Tibial artery (tissue), 4 donors: ENCODE measurements at regions of chr12 and their contacts with region 1.

Region 1: DNA sequence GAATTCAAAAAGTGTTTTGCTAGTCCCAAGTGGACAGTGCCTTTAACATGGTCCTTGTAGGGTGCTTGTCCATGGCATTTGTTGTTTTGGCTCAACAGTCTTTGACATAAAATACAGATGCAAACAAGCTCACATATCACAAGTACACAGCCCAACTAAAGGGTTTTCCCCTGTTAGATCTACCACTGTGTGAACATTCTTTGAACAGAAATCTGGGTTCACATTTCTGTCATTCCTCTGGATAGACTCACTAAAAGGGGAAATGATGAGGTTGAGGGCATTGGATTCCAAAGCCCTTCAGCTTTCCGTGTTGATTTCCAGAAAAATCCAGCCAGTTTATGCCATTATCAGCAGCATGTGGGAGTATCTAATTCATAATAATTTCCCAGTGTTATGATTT is 54.1 kb downstream of the EP400 start:
- DNase-seq: no peak
- H3K4me3 ChIP-seq: no peak overlapping the region
- H3K27ac ChIP-seq: no peak overlapping the region
- H3K4me1 ChIP-seq: no peaks in the 10 kb centered on the region
- H3K27me3 ChIP-seq: no peaks in the 10 kb centered on the region
- CTCF ChIP-seq: no peak

Region 2: DNA sequence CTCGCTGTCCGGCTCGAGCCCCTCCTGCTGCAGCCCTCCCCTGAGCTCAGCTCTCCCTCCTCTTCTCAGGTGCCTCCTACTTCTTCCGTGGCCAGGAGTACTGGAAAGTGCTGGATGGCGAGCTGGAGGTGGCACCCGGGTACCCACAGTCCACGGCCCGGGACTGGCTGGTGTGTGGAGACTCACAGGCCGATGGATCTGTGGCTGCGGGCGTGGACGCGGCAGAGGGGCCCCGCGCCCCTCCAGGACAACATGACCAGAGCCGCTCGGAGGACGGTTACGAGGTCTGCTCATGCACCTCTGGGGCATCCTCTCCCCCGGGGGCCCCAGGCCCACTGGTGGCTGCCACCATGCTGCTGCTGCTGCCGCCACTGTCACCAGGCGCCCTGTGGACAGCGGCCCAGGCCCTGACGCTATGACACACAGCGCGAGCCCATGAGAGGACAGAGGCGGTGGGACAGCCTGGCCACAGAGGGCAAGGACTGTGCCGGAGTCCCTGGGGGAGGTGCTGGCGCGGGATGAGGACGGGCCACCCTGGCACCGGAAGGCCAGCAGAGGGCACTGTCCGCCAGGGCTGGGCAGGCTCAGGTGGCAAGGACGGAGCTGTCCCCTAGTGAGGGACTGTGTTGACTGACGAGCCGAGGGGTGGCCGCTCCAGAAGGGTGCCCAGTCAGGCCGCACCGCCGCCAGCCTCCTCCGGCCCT is 152.8 kb before region 1 on chr12:
- intact Hi-C with region 1: loop called (anchors 5 kb)
- DNase-seq: no peak
- H3K4me3 ChIP-seq: no peak overlapping the region
- H3K27ac ChIP-seq: no peak overlapping the region
- H3K4me1 ChIP-seq: no peaks in the 10 kb centered on the region
- H3K27me3 ChIP-seq: peaks cover 0 to 62% of the 10 kb centered on the region in 2 donors
- CTCF ChIP-seq: peak; percentile 58 to 67

Region 3: DNA sequence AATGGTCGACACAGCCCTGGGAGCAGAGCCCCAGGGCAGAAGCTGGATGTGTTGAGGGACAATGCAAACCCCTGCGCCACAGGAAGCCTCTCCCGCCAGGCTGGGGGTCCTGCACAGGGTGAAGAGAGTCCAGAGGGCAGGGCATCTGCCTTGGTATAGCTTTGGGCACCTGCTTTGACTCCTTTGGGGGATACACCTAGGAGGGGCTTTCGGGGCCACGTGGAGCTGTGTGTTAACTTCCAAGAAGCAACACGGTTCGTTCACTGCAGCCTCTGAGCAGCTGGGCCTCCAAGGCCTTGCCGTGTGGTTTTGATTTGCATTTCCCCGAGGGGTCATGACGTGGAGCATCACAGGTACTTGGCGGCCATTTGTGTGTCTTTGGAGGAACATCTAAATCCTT is 80.6 kb before region 1 on chr12:
- intact Hi-C with region 1: no loop called
- DNase-seq: no peak
- H3K4me3 ChIP-seq: no peak overlapping the region
- H3K27ac ChIP-seq: no peak overlapping the region
- H3K4me1 ChIP-seq: peaks cover 0 to 15% (median 8%) of the 10 kb centered on the region in 4 donors
- H3K27me3 ChIP-seq: no peaks in the 10 kb centered on the region
- CTCF ChIP-seq: no peak